ENCODE measurements at regions of chr19 and their contacts with region 1.

Region 1: GRCh38 chr19:13952154-13953035 is at the start of gene DCAF15:
- DNase-seq: peak; percentile 100
- ATAC-seq: peak; percentile 98 to 99
- H3K4me3 ChIP-seq: peak within 1 kb of the TSS; percentile 64 to 86 (median 80)
- H3K27ac ChIP-seq: peak within 1 kb of the TSS; percentile 87 to 90 (median 89)
- H3K4me1 ChIP-seq: peaks cover 18 to 26% of the 10 kb centered on the region in 2 donors
- H3K27me3 ChIP-seq: no peaks in the 10 kb centered on the region
- CTCF ChIP-seq: no peak
- POLR2A ChIP-seq: peak; percentile 44 to 53
- total RNA-seq, gene DCAF15: 11.2 to 38.8 (median 18.0) TPM

Region 2: GRCh38 chr19:13987101-13987890 is 34.9 kb after region 1 on chr19:
- in situ Hi-C with region 1: no loop called
- intact Hi-C with region 1: loop called (anchors 1 kb)
- DNase-seq: peak; percentile 93 to 98
- ATAC-seq: peak; percentile 86 to 88
- H3K4me3 ChIP-seq: peak overlapping the region; percentile 14 to 47 (median 27)
- H3K27ac ChIP-seq: peak overlapping the region; percentile 85 to 97 (median 90)
- H3K4me1 ChIP-seq: peaks cover 35 to 37% of the 10 kb centered on the region in 2 donors
- H3K27me3 ChIP-seq: no peaks in the 10 kb centered on the region
- CTCF ChIP-seq: no peak
- POLR2A ChIP-seq: peak; percentile 14 to 40

Measured in gastrocnemius medialis (tissue), 4 donors.